Breast epithelium (tissue), 4 donors: ENCODE measurements at regions of chr1 and their contacts with region 1.

Region 1: GRCh38 chr1:227357171-227357880 is 39.0 kb upstream of the CDC42BPA start:
- DNase-seq: no peak
- H3K4me3 ChIP-seq: no peak overlapping the region
- H3K27ac ChIP-seq: peak overlapping the region in 1 of 2 donors; percentile 69
- H3K4me1 ChIP-seq: no peaks in the 10 kb centered on the region
- H3K27me3 ChIP-seq: no peaks in the 10 kb centered on the region
- CTCF ChIP-seq: no peak
- POLR2A ChIP-seq: no peak

Region 2: GRCh38 chr1:226320930-226321329 is 1036.4 kb before region 1 on chr1:
- intact Hi-C with region 1: no loop called
- DNase-seq: no peak
- H3K4me3 ChIP-seq: no peak overlapping the region
- H3K27ac ChIP-seq: no peak overlapping the region
- H3K4me1 ChIP-seq: no peaks in the 10 kb centered on the region
- H3K27me3 ChIP-seq: peaks cover 0 to 6% of the 10 kb centered on the region in 2 donors
- CTCF ChIP-seq: no peak
- POLR2A ChIP-seq: no peak

Region 3: DNA sequence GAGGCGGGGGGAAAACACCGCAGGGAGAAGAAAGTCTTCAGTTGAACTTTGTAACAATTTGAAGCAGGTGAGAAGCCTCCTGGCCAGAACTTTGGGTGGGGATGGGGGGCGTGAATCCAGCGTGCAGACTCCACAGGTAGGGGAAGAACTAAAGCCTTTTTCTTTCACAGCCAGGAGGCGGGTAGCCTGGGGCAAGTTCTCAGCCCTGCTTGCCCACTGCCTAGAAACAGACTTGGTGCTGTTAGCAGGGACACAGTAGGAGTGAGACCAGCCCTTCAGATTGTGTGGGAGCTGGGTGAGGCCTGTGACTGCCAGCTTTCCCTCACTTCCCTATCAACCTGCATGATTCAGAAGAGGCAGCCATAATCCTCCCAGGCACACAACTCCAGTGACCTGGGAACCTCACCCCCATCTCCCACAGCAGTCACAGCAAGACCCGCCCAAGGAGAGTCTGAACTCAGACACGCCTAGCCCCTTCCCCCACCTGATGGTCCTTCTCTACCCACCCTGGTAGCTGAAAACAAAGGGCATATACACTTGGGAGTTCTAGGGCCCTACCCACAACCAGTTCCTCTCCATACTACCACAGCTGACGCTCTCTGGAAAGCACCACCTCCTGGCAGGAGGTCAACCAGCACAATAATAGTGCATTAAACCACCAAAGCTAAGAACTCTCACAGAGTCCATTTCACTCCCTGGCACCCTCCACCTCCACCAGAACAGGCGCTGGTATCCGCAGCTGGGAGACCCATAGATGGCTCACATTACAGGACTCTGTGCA is 44.4 kb after region 1 on chr1:
- intact Hi-C with region 1: loop called (anchors 1 kb)
- DNase-seq: no peak
- H3K4me3 ChIP-seq: no peak overlapping the region
- H3K27ac ChIP-seq: no peak overlapping the region
- H3K4me1 ChIP-seq: no peaks in the 10 kb centered on the region
- H3K27me3 ChIP-seq: no peaks in the 10 kb centered on the region
- CTCF ChIP-seq: no peak
- POLR2A ChIP-seq: no peak